B cell (primary cell): ENCODE measurements at regions of chr20 and their contacts with region 1.

Region 1: DNA sequence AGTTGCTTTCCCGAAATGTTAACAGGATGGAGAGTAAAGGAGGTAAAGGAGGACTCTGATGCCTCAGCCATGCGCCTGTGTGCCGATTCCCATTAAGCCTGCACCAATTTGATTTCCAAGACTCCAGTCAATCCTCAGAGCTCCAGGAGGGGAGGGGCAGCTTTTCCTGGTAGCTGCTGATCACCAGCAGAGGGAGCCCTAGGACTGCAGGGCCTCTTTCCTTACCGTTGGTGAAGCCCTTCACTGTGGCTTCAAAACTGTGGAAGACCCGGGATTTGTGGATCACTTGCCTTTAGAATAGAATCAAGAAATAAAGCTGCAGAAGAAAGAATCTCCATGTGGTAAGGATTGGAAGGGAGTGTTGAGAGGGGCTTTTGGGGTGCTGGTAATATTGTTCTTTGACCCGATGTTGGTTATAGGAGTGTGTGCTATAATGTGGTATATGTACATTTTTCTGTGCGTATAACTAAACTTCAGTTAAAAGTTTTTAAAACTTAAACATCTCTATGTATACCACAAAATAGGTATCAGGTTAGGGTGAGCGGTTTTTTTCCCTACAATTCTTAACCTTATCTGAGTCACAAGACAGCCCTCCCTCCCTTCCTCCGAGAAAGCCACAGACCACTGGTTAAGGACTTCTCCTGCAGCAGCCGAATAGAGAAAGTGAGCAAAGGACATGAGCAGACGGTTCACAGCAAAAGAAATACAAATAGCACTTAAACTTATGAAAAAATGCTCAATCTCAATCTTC is 6.9 kb upstream of the OSER1 start:
- DNase-seq: peak; percentile 72
- ATAC-seq: peak; percentile 57
- H3K4me3 ChIP-seq: no peak overlapping the region
- H3K4me3 Mint-ChIP-seq: peak overlapping the region; percentile 40
- H3K27ac ChIP-seq: no peak overlapping the region
- H3K27ac Mint-ChIP-seq: no peak overlapping the region
- H3K4me1 ChIP-seq: peaks cover 18 to 22% of the 10 kb centered on the region in 2 donors
- H3K4me1 Mint-ChIP-seq: peaks cover 34% of the 10 kb centered on the region
- H3K27me3 ChIP-seq: no peaks in the 10 kb centered on the region
- H3K27me3 Mint-ChIP-seq: no peaks in the 10 kb centered on the region
- CTCF ChIP-seq: peak; percentile 94

Region 2: DNA sequence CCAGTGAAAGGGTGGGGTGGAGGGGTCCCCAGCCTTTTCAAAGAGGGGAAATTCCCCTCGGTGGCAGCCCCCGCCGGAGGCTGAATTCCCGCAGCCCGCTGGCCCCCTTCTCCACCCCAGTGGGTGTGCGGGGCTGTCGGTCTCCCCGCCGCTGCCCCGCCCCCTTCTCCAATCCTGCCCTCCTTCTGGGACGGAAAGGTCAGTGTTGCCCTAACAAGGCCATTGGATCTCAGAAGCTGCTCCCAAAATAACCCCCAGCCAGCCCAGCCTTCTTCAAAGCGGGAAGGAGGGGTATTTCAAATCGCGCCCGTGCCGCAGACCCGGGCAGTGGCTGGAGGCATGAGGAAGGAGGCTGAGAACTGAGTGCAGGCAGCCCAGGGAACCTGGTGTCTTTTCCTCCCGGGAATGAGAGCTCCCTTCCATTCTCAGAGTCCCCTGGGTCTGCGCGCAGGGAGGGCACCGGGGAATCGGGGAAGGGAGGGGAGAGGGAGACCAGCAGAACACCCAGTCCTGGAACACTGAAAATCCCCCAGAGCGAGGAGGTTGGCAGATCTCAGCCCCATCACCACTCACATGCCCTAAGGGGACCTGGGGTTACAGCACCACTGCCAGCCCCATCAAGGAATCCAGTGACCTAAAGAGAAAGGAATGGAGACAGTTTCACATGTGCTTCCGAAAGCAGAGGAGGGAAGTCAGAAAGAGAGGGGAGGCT is 30.3 kb before region 1 on chr20 and contains the start of gene JPH2:
- CTCF ChIA-PET with region 1: interaction called, 23 read pairs
- POLR2A ChIA-PET with region 1: no interaction called
- intact Hi-C with region 1: no loop called
- DNase-seq: peak; percentile 27
- ATAC-seq: no peak
- H3K4me3 ChIP-seq: peak within 1 kb of the TSS in 4 of 5 experiments; percentile 0 to 42 (median 18)
- H3K4me3 Mint-ChIP-seq: peak within 1 kb of the TSS; percentile 80
- H3K27ac ChIP-seq: no peak within 1 kb of the TSS
- H3K27ac Mint-ChIP-seq: peak within 1 kb of the TSS; percentile 8
- H3K4me1 ChIP-seq: peaks cover 20 to 21% of the 10 kb centered on the region in 2 donors
- H3K4me1 Mint-ChIP-seq: peaks cover 32% of the 10 kb centered on the region
- H3K27me3 ChIP-seq: peaks cover 0 to 45% (median 15%) of the 10 kb centered on the region in 4 experiments
- H3K27me3 Mint-ChIP-seq: peaks cover 60% of the 10 kb centered on the region
- CTCF ChIP-seq: no peak
- total RNA-seq, gene JPH2: 0.10 and 0.17 TPM in 2 replicates

Region 3: GRCh38 chr20:44231713-44232468 is 14.4 kb after region 1 on chr20:
- CTCF ChIA-PET with region 1: interaction called, 10 read pairs
- POLR2A ChIA-PET with region 1: no interaction called
- intact Hi-C with region 1: no loop called
- DNase-seq: no peak
- ATAC-seq: no peak
- H3K4me3 ChIP-seq: no peak overlapping the region
- H3K4me3 Mint-ChIP-seq: no peak overlapping the region
- H3K27ac ChIP-seq: no peak overlapping the region
- H3K27ac Mint-ChIP-seq: no peak overlapping the region
- H3K4me1 ChIP-seq: no peaks in the 10 kb centered on the region
- H3K4me1 Mint-ChIP-seq: no peaks in the 10 kb centered on the region
- H3K27me3 ChIP-seq: no peaks in the 10 kb centered on the region
- H3K27me3 Mint-ChIP-seq: peaks cover 3% of the 10 kb centered on the region
- CTCF ChIP-seq: no peak

Region 4: GRCh38 chr20:44460795-44461141 is 243.3 kb after region 1 on chr20:
- CTCF ChIA-PET with region 1: interaction called, 12 read pairs
- POLR2A ChIA-PET with region 1: no interaction called
- intact Hi-C with region 1: loop called (anchors 5 kb)
- DNase-seq: no peak
- ATAC-seq: no peak
- H3K4me3 ChIP-seq: no peak overlapping the region
- H3K4me3 Mint-ChIP-seq: no peak overlapping the region
- H3K27ac ChIP-seq: no peak overlapping the region
- H3K27ac Mint-ChIP-seq: no peak overlapping the region
- H3K4me1 ChIP-seq: no peaks in the 10 kb centered on the region
- H3K4me1 Mint-ChIP-seq: no peaks in the 10 kb centered on the region
- H3K27me3 ChIP-seq: no peaks in the 10 kb centered on the region
- H3K27me3 Mint-ChIP-seq: no peaks in the 10 kb centered on the region
- CTCF ChIP-seq: no peak

Region 5: GRCh38 chr20:44664131-44664530 is 446.6 kb after region 1 on chr20:
- CTCF ChIA-PET with region 1: no interaction called
- POLR2A ChIA-PET with region 1: no interaction called
- intact Hi-C with region 1: no loop called
- DNase-seq: no peak
- ATAC-seq: no peak
- H3K4me3 ChIP-seq: no peak overlapping the region
- H3K4me3 Mint-ChIP-seq: no peak overlapping the region
- H3K27ac ChIP-seq: no peak overlapping the region
- H3K27ac Mint-ChIP-seq: no peak overlapping the region
- H3K4me1 ChIP-seq: peaks cover 4% of the 10 kb centered on the region in 2 donors
- H3K4me1 Mint-ChIP-seq: peaks cover 7% of the 10 kb centered on the region
- H3K27me3 ChIP-seq: peaks cover 0 to 3% (median 0%) of the 10 kb centered on the region in 4 experiments
- H3K27me3 Mint-ChIP-seq: no peaks in the 10 kb centered on the region
- CTCF ChIP-seq: no peak

Region 6: DNA sequence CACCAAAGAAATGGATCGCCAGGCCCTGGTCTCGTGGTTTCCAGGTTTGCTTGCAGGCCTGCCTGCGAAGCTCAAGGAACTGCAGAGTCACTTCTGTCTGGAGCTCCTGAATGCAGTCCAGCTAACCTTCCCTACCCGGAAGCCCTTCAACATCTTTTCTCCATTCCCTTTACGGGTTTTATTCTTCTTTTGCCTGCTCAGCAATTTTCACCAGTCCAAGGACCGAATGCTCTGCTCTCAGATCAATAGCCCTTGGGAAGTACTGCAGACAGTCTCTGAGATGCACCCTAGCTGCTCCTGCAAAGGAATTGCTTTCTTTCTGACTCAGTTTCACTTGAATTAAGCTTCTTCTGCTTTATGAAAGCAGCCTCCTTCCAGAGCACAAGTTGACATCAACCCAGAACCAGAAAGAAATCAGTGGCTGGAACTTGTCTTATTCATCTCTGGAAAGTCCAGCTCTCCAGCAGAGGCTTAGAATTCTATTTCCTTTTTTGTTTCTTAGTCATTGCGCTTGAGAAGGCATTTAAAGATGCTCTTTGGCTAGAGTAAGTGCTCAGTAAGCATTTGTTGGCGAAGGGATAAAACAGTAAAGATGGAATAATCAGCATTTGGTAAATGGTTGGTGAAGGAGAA is 649.3 kb after region 1 on chr20:
- CTCF ChIA-PET with region 1: interaction called, 10 read pairs
- POLR2A ChIA-PET with region 1: no interaction called
- intact Hi-C with region 1: no loop called
- DNase-seq: no peak
- ATAC-seq: no peak
- H3K4me3 ChIP-seq: no peak overlapping the region
- H3K4me3 Mint-ChIP-seq: peak overlapping the region; percentile 76
- H3K27ac ChIP-seq: no peak overlapping the region
- H3K27ac Mint-ChIP-seq: no peak overlapping the region
- H3K4me1 ChIP-seq: peaks cover 0 to 8% of the 10 kb centered on the region in 2 donors
- H3K4me1 Mint-ChIP-seq: peaks cover 6% of the 10 kb centered on the region
- H3K27me3 ChIP-seq: peaks cover 0 to 7% (median 1%) of the 10 kb centered on the region in 4 experiments
- H3K27me3 Mint-ChIP-seq: peaks cover 3% of the 10 kb centered on the region
- CTCF ChIP-seq: no peak